Prostate gland (tissue), 2 donors: ENCODE measurements at regions of chr7 and their contacts with region 1.

Region 1: DNA sequence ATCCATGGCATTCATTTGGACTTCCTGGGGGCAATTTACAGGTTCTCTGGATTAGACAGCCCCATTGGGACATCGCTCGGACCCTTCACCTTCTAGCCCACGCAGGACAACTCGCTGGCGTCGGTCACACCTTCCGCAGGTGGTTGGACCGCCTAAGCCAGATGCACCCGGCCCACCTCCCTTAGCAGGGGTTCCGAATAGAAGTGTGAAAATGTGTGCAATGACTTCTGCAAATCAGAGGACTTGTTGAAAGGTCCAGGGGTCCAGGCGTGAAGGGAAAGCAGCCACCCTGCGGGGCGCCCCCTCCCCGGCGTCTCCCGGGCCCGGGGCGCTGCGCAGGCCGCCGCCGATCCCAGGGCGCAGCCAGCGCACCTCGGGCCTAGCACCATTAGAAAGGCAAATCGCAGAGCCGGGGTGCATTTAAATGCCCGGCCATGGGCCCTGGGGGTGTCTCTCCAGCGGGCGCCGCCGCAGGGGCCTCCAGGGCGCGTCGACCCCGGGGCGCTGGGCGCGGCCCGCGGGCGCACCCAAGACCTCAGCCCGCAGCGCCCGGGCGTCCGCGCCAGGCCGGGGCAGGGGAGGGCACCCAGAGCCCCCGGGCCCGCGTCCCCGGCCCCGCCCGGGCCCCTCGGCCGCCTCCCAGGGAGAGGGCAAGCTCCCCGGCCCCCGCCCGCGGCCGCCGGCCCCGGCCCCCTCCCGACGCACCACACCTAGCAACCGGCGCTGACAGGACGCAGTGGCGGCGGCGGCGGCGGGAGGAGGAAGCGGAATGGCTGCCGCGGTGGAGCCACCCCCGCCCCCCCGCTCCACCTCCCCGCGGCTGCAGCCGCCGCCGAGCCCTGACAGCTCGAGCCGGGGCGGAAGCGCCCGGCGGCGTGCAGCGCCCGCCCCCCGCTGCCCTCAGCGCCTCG is 1.2 kb downstream of the JAZF1 start:
- DNase-seq: peak; percentile 65
- H3K4me3 ChIP-seq: peak overlapping the region; percentile 62 to 77
- H3K27ac ChIP-seq: peak overlapping the region; percentile 67
- H3K4me1 ChIP-seq: no peaks in the 10 kb centered on the region
- H3K27me3 ChIP-seq: no peaks in the 10 kb centered on the region
- CTCF ChIP-seq: no peak
- POLR2A ChIP-seq: no peak

Region 2: GRCh38 chr7:27759491-27759890 is 419.9 kb before region 1 on chr7:
- intact Hi-C with region 1: no loop called
- DNase-seq: no peak
- H3K4me3 ChIP-seq: no peak overlapping the region
- H3K27ac ChIP-seq: no peak overlapping the region
- H3K4me1 ChIP-seq: no peaks in the 10 kb centered on the region
- H3K27me3 ChIP-seq: no peaks in the 10 kb centered on the region
- CTCF ChIP-seq: no peak
- POLR2A ChIP-seq: no peak

Region 3: DNA sequence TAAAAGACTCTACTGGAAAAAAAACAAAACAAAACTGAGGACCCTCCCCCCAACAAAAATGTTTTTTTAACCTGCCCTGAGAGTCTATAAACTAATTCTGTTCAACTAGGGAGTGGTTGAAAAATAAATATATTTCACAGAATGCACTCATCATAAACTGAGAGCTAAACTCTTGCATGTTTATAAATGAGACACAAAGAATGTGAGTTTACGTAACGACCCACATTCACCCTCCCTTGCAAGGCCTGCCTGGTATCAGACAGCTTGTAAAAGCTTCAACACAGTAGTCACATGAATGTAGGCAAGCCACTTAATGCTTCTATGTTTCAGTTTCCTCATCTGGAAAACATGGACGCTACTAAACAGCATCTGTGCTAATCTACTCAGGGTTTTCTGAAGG is 49.1 kb before region 1 on chr7:
- intact Hi-C with region 1: loop called (anchors 5 kb)
- DNase-seq: no peak
- H3K4me3 ChIP-seq: no peak overlapping the region
- H3K27ac ChIP-seq: peak overlapping the region in 1 of 2 donors; percentile 18
- H3K4me1 ChIP-seq: no peaks in the 10 kb centered on the region
- H3K27me3 ChIP-seq: no peaks in the 10 kb centered on the region
- CTCF ChIP-seq: no peak
- POLR2A ChIP-seq: no peak

Region 4: DNA sequence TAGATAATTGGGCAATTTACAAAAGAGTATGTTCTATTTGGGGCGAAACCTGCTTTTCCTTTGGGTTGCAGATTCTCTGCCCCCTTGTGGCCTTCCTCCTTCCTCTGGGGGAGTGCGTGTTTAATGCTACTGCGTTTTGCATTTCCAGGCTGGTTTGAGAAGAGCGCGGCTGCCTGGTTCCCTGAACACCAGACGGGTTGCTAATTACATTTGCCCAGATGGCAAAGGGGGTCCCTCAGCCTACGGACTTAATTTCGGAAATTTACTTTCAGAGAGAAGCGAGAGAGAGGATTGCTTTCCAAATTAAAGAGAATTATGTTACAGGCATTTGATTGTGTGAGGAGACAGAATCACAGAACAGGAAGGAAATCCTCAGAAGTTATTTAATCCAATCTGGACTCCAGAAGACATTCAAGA is 93.1 kb after region 1 on chr7:
- intact Hi-C with region 1: loop called (anchors 10 kb)
- DNase-seq: no peak
- H3K4me3 ChIP-seq: no peak overlapping the region
- H3K27ac ChIP-seq: no peak overlapping the region
- H3K4me1 ChIP-seq: no peaks in the 10 kb centered on the region
- H3K27me3 ChIP-seq: no peaks in the 10 kb centered on the region
- CTCF ChIP-seq: peak in 3 of 4 experiments; percentile 19 to 39 (median 32)
- POLR2A ChIP-seq: no peak